Posterior vena cava (tissue), 2 donors: ENCODE measurements at regions of chr3 and their contacts with region 1.

Region 1: GRCh38 chr3:133573054-133573628 is 345 bp upstream of the CDV3 start:
- DNase-seq: peak; percentile 100

Region 2: GRCh38 chr3:132530624-132531023 is 1042.5 kb before region 1 on chr3:
- intact Hi-C with region 1: loop called in 1 of 2 experiments (anchors 5 kb)
- DNase-seq: no peak

Region 3: DNA sequence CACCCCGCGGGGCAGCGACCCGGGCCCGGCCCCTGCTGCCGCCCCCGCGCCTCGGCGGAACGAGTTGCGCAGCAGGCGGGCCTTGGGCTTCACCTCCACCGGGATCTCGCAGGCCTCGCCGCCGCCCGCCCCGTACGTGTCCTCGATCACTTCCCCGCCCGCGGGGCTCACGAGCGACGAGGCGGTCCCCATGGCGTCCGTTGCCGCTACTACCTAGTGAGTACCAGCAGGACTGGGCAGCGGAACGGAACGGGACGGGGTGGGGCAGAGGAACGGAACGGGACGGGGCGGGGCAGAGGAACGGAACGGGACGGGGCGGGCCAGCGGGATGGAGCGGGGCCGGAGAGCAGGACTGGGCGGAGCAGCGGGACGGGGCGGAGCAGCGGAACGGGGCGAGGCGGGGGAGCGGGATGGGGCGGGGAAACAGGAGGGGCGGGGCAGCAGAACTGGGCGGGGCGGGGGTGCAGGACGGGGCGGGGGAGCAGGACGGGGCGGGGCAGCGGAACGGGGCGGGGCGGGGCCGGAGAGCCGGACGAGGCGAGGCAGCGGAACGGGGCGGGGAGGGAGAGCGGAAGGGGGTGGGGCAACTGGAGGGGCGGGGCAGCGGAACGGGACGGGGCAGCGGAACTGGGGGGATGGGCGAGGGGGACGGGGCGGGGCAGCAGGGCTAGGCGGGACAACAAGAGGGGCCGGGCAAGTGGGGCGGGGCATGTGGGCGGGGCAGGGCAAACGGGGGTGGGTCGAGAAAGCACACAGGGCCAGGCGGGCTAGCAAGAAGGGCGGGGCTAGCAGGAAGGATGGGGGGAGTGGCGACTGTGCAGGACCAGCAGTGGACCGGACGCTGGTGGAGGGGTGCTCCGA is 850.7 kb before region 1 on chr3 and contains the start of gene NPHP3:
- intact Hi-C with region 1: loop called (anchors 5 to 10 kb)
- DNase-seq: peak; percentile 99
- total RNA-seq, gene NPHP3: 22.1 to 24.9 TPM

Region 4: GRCh38 chr3:133475245-133476010 is 97.7 kb before region 1 on chr3:
- intact Hi-C with region 1: loop called in 1 of 2 experiments (anchors 10 kb)
- DNase-seq: no peak

Region 5: GRCh38 chr3:133535971-133536634 is 37.0 kb before region 1 on chr3:
- intact Hi-C with region 1: loop called in 1 of 2 experiments (anchors 2 kb)
- DNase-seq: no peak

Region 6: GRCh38 chr3:134485718-134486576 is 912.8 kb after region 1 on chr3 and contains the starts of genes ANAPC13 and CEP63:
- intact Hi-C with region 1: loop called in 1 of 2 experiments (anchors 10 kb)
- DNase-seq: peak; percentile 98
- total RNA-seq, gene ANAPC13: 33.5 to 43.5 TPM
- total RNA-seq, gene CEP63: 23.1 to 23.8 TPM